ENCODE measurements at regions of chr6 and their contacts with region 1.

Region 1: GRCh38 chr6:43506667-43507471 is 3.3 kb downstream of the LRRC73 start:
- DNase-seq: peak; percentile 73 to 79 (median 77)
- H3K4me3 ChIP-seq: no peak overlapping the region
- H3K4me3 Mint-ChIP-seq: peak overlapping the region in 1 of 8 donors; percentile 70
- H3K27ac ChIP-seq: peak overlapping the region; percentile 8
- H3K27ac Mint-ChIP-seq: peak overlapping the region in 6 of 7 donors; percentile 31 to 86 (median 69)
- H3K4me1 ChIP-seq: peaks cover 17% of the 10 kb centered on the region
- H3K4me1 Mint-ChIP-seq: peaks cover 8 to 37% (median 18%) of the 10 kb centered on the region in 4 donors
- H3K27me3 ChIP-seq: peaks cover 11% of the 10 kb centered on the region
- H3K27me3 Mint-ChIP-seq: peaks cover 9 to 13% of the 10 kb centered on the region in 2 donors

Region 2: GRCh38 chr6:42777126-42777822 is 729.6 kb before region 1 on chr6:
- CTCF ChIA-PET with region 1: no interaction called
- POLR2A ChIA-PET with region 1: no interaction called
- intact Hi-C with region 1: no loop called
- DNase-seq: no peak
- H3K4me3 ChIP-seq: no peak overlapping the region
- H3K4me3 Mint-ChIP-seq: peak overlapping the region in 6 of 8 donors; percentile 23 to 70 (median 50)
- H3K27ac ChIP-seq: peak overlapping the region; percentile 34
- H3K27ac Mint-ChIP-seq: peak overlapping the region; percentile 72 to 98 (median 85)
- H3K4me1 ChIP-seq: peaks cover 88% of the 10 kb centered on the region
- H3K4me1 Mint-ChIP-seq: peaks cover 47 to 84% (median 64%) of the 10 kb centered on the region in 4 donors
- H3K27me3 ChIP-seq: no peaks in the 10 kb centered on the region
- H3K27me3 Mint-ChIP-seq: peaks cover 0 to 1% of the 10 kb centered on the region in 2 donors

Region 3: DNA sequence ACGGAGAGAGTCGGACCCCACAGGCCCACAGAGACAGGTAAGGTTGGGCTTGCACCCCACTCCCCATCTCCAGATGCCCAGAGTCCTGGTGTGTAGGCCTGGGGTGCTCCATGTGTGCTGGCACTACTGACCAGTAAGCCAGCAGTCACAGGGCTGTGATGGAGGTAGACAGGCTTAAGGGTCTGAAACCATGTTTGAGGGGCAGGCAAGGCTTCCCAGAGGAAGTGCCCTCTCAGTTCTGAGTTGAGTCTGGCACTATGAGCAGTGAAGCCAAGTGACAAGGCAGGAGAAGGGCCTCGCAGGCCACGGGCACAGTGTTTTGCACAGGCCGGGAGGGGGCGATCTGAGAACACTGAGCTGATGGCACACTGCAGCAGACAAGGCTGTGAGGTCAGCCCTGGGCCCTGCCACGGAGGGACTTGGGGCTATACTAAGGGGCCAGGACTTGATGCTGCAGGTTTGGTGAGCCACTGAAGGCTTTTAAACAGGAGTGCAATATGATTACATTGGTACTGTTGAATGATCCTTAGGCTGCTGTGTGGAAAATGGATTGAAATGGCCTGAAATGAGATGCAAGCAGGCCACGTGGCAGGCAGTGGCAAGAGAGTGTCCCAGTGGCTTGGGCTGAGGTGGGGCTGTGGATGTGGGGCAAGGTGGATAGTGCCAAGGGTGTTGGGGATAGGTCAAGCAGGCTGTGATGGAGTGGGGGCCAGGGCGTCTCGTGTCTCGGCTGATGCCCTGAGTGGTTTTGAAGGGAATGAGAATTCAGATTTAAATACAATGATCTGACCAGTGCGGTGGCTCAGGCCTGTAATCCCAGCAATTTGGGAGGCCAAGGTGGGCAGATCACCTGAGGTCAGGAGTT is 243.3 kb before region 1 on chr6:
- CTCF ChIA-PET with region 1: interaction called, 41 read pairs
- POLR2A ChIA-PET with region 1: interaction called, 6 read pairs
- intact Hi-C with region 1: loop called (anchors 1 kb)
- DNase-seq: peak; percentile 65 to 71 (median 66)
- H3K4me3 ChIP-seq: no peak overlapping the region
- H3K4me3 Mint-ChIP-seq: peak overlapping the region in 1 of 8 donors; percentile 9
- H3K27ac ChIP-seq: no peak overlapping the region
- H3K27ac Mint-ChIP-seq: no peak overlapping the region
- H3K4me1 ChIP-seq: peaks cover 6% of the 10 kb centered on the region
- H3K4me1 Mint-ChIP-seq: peaks cover 0 to 4% (median 2%) of the 10 kb centered on the region in 4 donors
- H3K27me3 ChIP-seq: no peaks in the 10 kb centered on the region
- H3K27me3 Mint-ChIP-seq: peaks cover 0 to 1% of the 10 kb centered on the region in 2 donors

Region 4: DNA sequence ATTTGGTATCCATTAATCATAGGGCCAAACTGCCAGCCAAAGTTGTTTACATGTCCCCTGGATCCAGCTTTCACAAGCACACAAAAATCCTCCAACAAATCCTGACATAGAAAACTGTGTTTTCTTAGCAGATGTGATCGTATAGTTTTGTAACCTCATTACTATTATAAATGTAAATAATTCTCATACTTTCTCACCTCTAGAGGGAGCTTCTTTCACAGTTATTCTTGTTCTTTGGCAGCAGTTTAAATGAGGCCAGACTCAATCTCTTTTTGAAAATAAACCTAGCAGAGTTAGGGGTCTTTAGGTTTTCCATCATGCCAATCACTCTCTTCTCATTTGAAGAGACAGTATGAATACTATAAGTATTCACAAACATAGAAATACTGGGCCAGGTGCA is 120.4 kb before region 1 on chr6:
- CTCF ChIA-PET with region 1: interaction called, 4 read pairs
- POLR2A ChIA-PET with region 1: interaction called, 6 read pairs
- intact Hi-C with region 1: loop called (anchors 1 kb)
- DNase-seq: peak in 3 of 5 donors; percentile 29 to 60 (median 36)
- H3K4me3 ChIP-seq: no peak overlapping the region
- H3K4me3 Mint-ChIP-seq: peak overlapping the region in 2 of 8 donors; percentile 28 to 64
- H3K27ac ChIP-seq: no peak overlapping the region
- H3K27ac Mint-ChIP-seq: peak overlapping the region in 6 of 7 donors; percentile 43 to 92 (median 84)
- H3K4me1 ChIP-seq: peaks cover 67% of the 10 kb centered on the region
- H3K4me1 Mint-ChIP-seq: peaks cover 54 to 74% (median 63%) of the 10 kb centered on the region in 4 donors
- H3K27me3 ChIP-seq: no peaks in the 10 kb centered on the region
- H3K27me3 Mint-ChIP-seq: peaks cover 0 to 8% of the 10 kb centered on the region in 2 donors

Region 5: GRCh38 chr6:43427406-43428111 is 79.3 kb before region 1 on chr6 and contains the start of gene ABCC10:
- CTCF ChIA-PET with region 1: interaction called, 9 read pairs
- POLR2A ChIA-PET with region 1: interaction called, 8 read pairs
- intact Hi-C with region 1: loop called (anchors 1 kb)
- DNase-seq: peak; percentile 93 to 97 (median 95)
- H3K4me3 ChIP-seq: peak within 1 kb of the TSS; percentile 70 to 95
- H3K4me3 Mint-ChIP-seq: peak within 1 kb of the TSS; percentile 92 to 98 (median 96)
- H3K27ac ChIP-seq: peak within 1 kb of the TSS; percentile 79
- H3K27ac Mint-ChIP-seq: peak within 1 kb of the TSS; percentile 88 to 99 (median 98)
- H3K4me1 ChIP-seq: peaks cover 30% of the 10 kb centered on the region
- H3K4me1 Mint-ChIP-seq: peaks cover 20 to 28% (median 24%) of the 10 kb centered on the region in 4 donors
- H3K27me3 ChIP-seq: no peaks in the 10 kb centered on the region
- H3K27me3 Mint-ChIP-seq: no peaks in the 10 kb centered on the region
- total RNA-seq, gene ABCC10: 69.9 to 80.0 TPM

Region 6: DNA sequence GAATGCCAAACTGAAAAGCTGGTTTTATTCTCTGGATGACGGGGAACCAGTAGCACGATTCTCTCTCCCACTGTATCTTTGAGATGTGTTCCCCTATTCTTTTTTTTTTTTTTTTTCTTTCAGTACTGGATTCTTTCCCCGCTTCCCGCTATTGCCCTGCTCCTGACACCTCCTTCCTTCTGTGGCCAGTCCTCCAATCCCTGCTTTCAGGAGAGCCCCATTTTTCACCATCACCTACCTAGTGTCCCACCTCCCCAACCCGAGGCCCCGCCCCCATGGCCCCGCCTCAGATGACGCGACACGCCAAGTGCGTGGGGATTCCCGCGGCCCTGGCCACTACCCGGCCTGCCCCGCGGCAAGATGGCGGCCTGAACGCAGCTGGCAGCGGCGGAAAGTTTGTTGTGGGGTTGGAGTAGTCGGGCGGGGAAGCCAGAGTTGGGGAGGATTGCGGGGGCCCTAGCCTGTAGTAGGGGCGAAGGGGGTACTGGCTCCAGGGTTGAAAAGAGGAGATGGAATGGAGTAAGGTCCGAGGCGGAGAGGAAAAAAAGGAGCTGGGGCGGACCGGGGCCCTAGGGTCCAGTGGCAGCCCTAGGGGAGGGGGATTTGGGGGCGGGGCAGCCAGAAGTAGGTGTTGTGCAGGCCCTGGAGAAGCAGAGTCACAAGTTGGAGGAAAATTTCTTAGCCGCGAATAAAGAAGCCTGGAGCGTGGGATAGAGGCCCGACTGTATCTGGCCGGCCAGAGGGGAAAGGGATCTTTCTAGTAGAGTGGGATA is 29.4 kb before region 1 on chr6 and contains the start of gene TJAP1:
- CTCF ChIA-PET with region 1: interaction called, 22 read pairs
- POLR2A ChIA-PET with region 1: interaction called, 7 read pairs
- intact Hi-C with region 1: no loop called
- DNase-seq: peak; percentile 93 to 96 (median 94)
- H3K4me3 ChIP-seq: peak within 1 kb of the TSS; percentile 45 to 69
- H3K4me3 Mint-ChIP-seq: peak within 1 kb of the TSS; percentile 85 to 97 (median 92)
- H3K27ac ChIP-seq: peak within 1 kb of the TSS; percentile 97
- H3K27ac Mint-ChIP-seq: peak within 1 kb of the TSS; percentile 89 to 99 (median 97)
- H3K4me1 ChIP-seq: peaks cover 28% of the 10 kb centered on the region
- H3K4me1 Mint-ChIP-seq: peaks cover 38 to 46% (median 42%) of the 10 kb centered on the region in 4 donors
- H3K27me3 ChIP-seq: no peaks in the 10 kb centered on the region
- H3K27me3 Mint-ChIP-seq: no peaks in the 10 kb centered on the region
- total RNA-seq, gene TJAP1: 52.0 to 54.4 TPM

Region 7: GRCh38 chr6:43516697-43517504 is 10.0 kb after region 1 on chr6 and contains the starts of genes POLR1C and YIPF3:
- CTCF ChIA-PET with region 1: interaction called, 65 read pairs
- POLR2A ChIA-PET with region 1: interaction called, 21 read pairs
- intact Hi-C with region 1: no loop called
- DNase-seq: peak; percentile 91 to 97 (median 96)
- H3K4me3 ChIP-seq: peak within 1 kb of the TSS; percentile 91 to 99
- H3K4me3 Mint-ChIP-seq: no peak within 1 kb of the TSS
- H3K27ac ChIP-seq: peak within 1 kb of the TSS; percentile 92
- H3K27ac Mint-ChIP-seq: no peak within 1 kb of the TSS
- H3K4me1 ChIP-seq: peaks cover 44% of the 10 kb centered on the region
- H3K4me1 Mint-ChIP-seq: peaks cover 10 to 36% (median 24%) of the 10 kb centered on the region in 4 donors
- H3K27me3 ChIP-seq: no peaks in the 10 kb centered on the region
- H3K27me3 Mint-ChIP-seq: no peaks in the 10 kb centered on the region
- total RNA-seq, gene POLR1C: 42.5 to 47.7 TPM
- total RNA-seq, gene YIPF3: 74.8 to 82.9 TPM

Region 8: GRCh38 chr6:43635387-43636307 is 128.8 kb after region 1 on chr6 and contains the start of gene MAD2L1BP:
- CTCF ChIA-PET with region 1: no interaction called
- POLR2A ChIA-PET with region 1: no interaction called
- intact Hi-C with region 1: no loop called
- DNase-seq: peak; percentile 85 to 89 (median 87)
- H3K4me3 ChIP-seq: peak within 1 kb of the TSS; percentile 66 to 94
- H3K4me3 Mint-ChIP-seq: peak within 1 kb of the TSS; percentile 93 to 100 (median 99)
- H3K27ac ChIP-seq: peak within 1 kb of the TSS; percentile 84
- H3K27ac Mint-ChIP-seq: peak within 1 kb of the TSS; percentile 96 to 98 (median 97)
- H3K4me1 ChIP-seq: peaks cover 49% of the 10 kb centered on the region
- H3K4me1 Mint-ChIP-seq: peaks cover 26 to 62% (median 41%) of the 10 kb centered on the region in 4 donors
- H3K27me3 ChIP-seq: no peaks in the 10 kb centered on the region
- H3K27me3 Mint-ChIP-seq: no peaks in the 10 kb centered on the region
- total RNA-seq, gene MAD2L1BP: 31.7 to 33.0 TPM